GM12878 (cell line): ENCODE measurements at regions of chr14 and their contacts with region 1.

Region 1: DNA sequence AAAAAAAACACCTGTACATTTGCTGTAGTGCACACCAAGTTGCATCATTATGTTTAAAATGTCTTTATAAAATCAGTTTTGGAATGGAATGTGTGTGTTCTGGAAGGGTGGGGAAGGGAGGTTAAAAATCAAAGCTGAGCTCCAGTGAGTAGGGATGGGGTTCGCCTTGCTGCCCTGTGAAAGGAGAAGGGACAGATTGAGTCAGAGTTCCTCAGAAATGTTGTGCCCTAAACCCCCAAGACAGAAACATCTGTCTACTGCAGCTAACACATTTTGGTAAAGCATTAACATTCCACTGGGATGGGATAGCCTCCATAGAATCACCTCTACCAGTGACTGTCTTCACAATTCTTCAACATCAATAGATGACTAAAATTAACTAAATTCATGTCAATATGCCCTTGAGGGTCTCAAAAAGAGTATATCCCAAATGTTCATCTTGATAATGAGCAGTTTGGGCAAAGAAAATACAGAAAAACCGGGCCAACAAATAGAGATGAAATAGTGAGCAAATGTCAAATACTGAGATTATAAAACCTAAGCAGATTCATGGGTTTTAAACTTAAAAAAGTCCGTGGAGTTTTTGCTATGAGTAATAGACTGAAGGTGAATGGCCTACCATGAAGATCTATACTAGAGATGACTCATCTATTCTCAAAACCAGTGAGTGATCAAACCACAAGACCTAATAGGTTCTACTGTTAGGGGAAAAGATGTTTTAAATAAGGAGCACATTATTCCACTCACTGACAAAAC is 5.4 kb downstream of the HNRNPC start:
- DNase-seq: peak; percentile 56
- ATAC-seq: peak; percentile 72
- H3K4me3 ChIP-seq: peak overlapping the region; percentile 98
- H3K27ac ChIP-seq: peak overlapping the region; percentile 56; the same call in 1 of the 2 replicates
- H3K4me1 ChIP-seq: peaks cover 23% of the 10 kb centered on the region
- H3K27me3 ChIP-seq: no peaks in the 10 kb centered on the region
- CTCF ChIP-seq: no peak
- EP300 ChIP-seq: peak in 1 of 2 experiments; percentile 78; a peak in 1 of 4 replicates
- POLR2A ChIP-seq: no peak
- RAD21 ChIP-seq: no peak

Region 2: GRCh38 chr14:21071225-21072030 is 192.4 kb before region 1 on chr14:
- CTCF ChIA-PET with region 1: no interaction called
- POLR2A ChIA-PET with region 1: no interaction called
- RAD21 ChIA-PET with region 1: no interaction called
- SMC1A ChIA-PET with region 1: no interaction called
- in situ Hi-C with region 1: no loop called
- intact Hi-C with region 1: no loop called
- DNase-seq: peak; percentile 51
- ATAC-seq: peak; percentile 82
- H3K4me3 ChIP-seq: peak overlapping the region; percentile 67
- H3K27ac ChIP-seq: no peak overlapping the region
- H3K4me1 ChIP-seq: peaks cover 29% of the 10 kb centered on the region
- H3K27me3 ChIP-seq: peaks cover 9 to 20% of the 10 kb centered on the region in 2 experiments
- CTCF ChIP-seq: no peak
- EP300 ChIP-seq: no peak
- POLR2A ChIP-seq: no peak
- RAD21 ChIP-seq: no peak

Region 3: DNA sequence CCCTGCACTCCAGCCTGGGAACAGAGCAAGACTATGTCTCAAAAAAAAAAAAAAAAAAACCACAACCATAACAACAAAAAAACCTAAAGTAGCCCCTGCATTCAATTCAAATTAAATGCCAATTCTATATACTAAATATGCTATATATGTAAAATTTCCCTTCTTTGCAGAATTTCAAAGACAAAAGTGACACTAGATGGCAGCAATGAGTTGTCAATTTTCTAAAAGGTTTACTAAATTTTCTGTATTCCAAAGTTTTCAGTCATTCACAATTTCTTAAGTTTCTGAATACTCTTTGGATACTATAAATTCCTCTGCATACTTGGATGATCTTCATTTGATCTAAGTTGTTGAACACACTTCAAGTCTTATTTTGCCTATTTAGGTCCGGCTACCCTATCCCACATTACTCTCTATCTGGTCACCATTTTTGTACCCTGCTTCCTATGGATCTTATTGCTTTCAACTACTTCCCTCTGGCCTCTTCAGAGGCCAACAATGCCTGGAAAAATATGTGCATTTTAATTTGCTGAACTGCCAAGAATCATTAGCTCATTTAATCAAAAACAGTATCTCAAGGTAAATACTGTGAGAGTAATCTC is 22.5 kb before region 1 on chr14:
- CTCF ChIA-PET with region 1: interaction called, 14 read pairs
- POLR2A ChIA-PET with region 1: interaction called, 4 read pairs
- RAD21 ChIA-PET with region 1: interaction called, 4 read pairs
- SMC1A ChIA-PET with region 1: interaction called, 8 read pairs
- in situ Hi-C with region 1: no loop called
- intact Hi-C with region 1: no loop called
- DNase-seq: no peak
- ATAC-seq: no peak
- H3K4me3 ChIP-seq: no peak overlapping the region
- H3K27ac ChIP-seq: no peak overlapping the region
- H3K4me1 ChIP-seq: no peaks in the 10 kb centered on the region; the same call in 1 of the 2 replicates
- H3K27me3 ChIP-seq: no peaks in the 10 kb centered on the region
- CTCF ChIP-seq: peak in 1 of 3 experiments; percentile 37; a peak in 2 of 6 replicates
- EP300 ChIP-seq: no peak
- POLR2A ChIP-seq: no peak
- RAD21 ChIP-seq: 0 out of 2 replicates have a peak, but pooled peaks have one; percentile 21

Region 4: DNA sequence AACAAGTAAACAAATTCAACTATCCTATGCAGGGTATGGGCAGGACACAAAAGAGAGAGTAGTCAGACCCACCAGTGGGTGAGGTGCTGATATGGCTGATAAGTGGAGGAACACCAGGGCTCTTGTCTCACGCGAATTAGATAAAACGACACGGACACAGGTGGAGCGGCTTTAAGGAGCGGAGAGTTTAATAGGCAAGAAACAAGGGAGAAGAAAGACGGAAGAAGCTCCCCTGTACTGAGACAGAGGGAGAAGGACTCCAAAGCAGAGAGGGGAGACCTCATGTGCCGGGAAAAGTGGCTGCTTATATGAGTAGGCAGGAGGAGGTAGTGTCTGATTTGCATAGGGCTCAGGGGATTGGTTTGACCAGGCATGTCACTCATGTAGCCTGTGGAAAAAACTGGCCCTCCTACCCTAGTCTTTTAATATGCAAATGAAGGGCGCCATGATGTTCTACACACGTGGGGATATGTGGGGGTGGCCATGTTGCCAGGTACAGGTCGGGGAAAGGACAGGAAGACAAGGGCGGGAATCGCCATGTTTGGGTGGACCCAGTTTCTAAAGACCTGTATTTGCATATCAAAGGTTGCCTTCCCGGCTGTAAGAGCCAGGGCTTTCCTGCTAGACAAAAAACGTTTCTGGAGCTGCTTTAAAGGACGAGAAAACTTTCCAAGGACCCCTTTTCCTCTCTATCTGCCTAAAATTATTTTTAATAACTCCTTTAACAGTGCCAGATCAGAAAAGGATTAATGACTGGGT is 44.8 kb after region 1 on chr14:
- CTCF ChIA-PET with region 1: interaction called, 5 read pairs
- POLR2A ChIA-PET with region 1: interaction called, 13 read pairs
- RAD21 ChIA-PET with region 1: interaction called, 18 read pairs
- SMC1A ChIA-PET with region 1: interaction called, 15 read pairs
- in situ Hi-C with region 1: no loop called
- intact Hi-C with region 1: loop called (anchors 1 kb)
- DNase-seq: peak; percentile 88
- ATAC-seq: peak; percentile 94
- H3K4me3 ChIP-seq: peak overlapping the region; percentile 70
- H3K27ac ChIP-seq: peak overlapping the region; percentile 79
- H3K4me1 ChIP-seq: peaks cover 15% of the 10 kb centered on the region
- H3K27me3 ChIP-seq: no peaks in the 10 kb centered on the region
- CTCF ChIP-seq: no peak
- EP300 ChIP-seq: no peak
- POLR2A ChIP-seq: peak; percentile 82
- RAD21 ChIP-seq: no peak

Region 5: DNA sequence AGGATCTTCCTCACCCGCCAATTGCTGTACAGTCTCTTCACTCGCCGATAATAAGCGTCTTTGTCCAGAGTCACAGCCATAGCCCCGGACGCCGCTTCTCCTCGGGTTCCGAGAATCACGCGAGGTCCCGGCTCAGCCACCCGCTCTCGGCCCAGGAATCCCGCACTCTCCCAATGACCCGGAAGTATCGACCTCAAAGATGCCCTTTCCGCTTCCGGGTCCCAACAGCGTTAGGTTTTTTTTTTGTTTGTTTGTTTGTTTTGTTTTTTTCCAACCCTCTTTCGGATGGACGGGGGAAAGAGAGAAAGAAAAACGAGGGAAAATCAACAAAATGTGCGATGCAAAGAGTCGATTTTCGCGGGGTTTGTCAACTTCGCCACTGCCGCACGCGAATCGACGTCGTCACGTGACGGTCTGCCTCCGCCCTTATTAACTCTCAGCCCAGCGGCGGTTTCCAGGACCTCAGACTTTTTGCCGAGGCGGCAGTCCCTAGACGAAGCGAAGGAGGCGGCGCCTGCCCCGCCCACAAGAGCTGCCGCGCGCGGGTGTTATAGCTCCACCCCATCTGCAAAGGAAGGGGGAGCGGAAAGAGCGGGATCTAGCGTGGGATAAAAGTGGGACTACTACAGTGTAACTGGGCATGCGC is 120.1 kb after region 1 on chr14 and contains the start of gene SUPT16H:
- CTCF ChIA-PET with region 1: no interaction called
- POLR2A ChIA-PET with region 1: interaction called, 4 read pairs
- RAD21 ChIA-PET with region 1: interaction called, 13 read pairs
- SMC1A ChIA-PET with region 1: interaction called, 15 read pairs
- in situ Hi-C with region 1: no loop called
- intact Hi-C with region 1: loop called (anchors 10 kb)
- DNase-seq: peak; percentile 71
- ATAC-seq: peak; percentile 91
- H3K4me3 ChIP-seq: peak within 1 kb of the TSS; percentile 95
- H3K27ac ChIP-seq: peak within 1 kb of the TSS; percentile 94
- H3K4me1 ChIP-seq: peaks cover 9% of the 10 kb centered on the region
- H3K27me3 ChIP-seq: no peaks in the 10 kb centered on the region
- CTCF ChIP-seq: no peak
- EP300 ChIP-seq: no peak
- POLR2A ChIP-seq: peak; percentile 64
- RAD21 ChIP-seq: no peak
- polyA plus RNA-seq, gene SUPT16H: 90.7 to 106 TPM